Activated CD8-positive, alpha-beta T cell treated with anti-CD3 and anti-CD28 coated beads for 36 hours (primary cell): ENCODE measurements at regions of chr19 and their contacts with region 1.

Region 1: GRCh38 chr19:41641879-41642485 is 15.1 kb upstream of the CEACAM4 start:
- DNase-seq: peak; percentile 80
- ATAC-seq: peak; percentile 88
- H3K4me3 Mint-ChIP-seq: no peak overlapping the region
- H3K27ac Mint-ChIP-seq: no peak overlapping the region
- H3K4me1 Mint-ChIP-seq: no peaks in the 10 kb centered on the region
- H3K27me3 Mint-ChIP-seq: peaks cover 10% of the 10 kb centered on the region
- CTCF ChIP-seq: peak; percentile 94

Region 2: DNA sequence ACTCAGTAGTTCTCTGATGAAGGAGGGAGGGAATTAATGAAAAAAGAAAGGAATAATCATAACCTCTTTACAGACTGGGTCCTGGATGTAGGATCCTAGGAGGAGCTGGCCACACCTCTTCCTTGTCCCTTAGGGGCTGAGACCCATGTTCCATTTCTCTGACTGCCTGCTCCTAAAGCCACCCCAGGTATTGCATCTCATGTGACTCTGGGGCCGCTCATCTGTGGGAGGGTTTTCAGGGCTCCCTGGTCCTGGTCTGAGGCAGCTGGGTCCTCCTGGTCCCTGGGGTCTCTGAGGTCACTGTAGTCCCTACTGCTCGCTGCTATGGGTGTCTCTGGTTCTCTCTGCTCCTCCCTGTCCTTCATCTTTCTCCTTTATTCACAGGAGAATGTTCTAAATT is 63.1 kb before region 1 on chr19:
- CTCF ChIA-PET with region 1: no interaction called
- POLR2A ChIA-PET with region 1: no interaction called
- intact Hi-C with region 1: no loop called
- DNase-seq: no peak
- ATAC-seq: no peak
- H3K4me3 Mint-ChIP-seq: no peak overlapping the region
- H3K27ac Mint-ChIP-seq: no peak overlapping the region
- H3K4me1 Mint-ChIP-seq: peaks cover 18% of the 10 kb centered on the region
- H3K27me3 Mint-ChIP-seq: no peaks in the 10 kb centered on the region
- CTCF ChIP-seq: no peak

Region 3: DNA sequence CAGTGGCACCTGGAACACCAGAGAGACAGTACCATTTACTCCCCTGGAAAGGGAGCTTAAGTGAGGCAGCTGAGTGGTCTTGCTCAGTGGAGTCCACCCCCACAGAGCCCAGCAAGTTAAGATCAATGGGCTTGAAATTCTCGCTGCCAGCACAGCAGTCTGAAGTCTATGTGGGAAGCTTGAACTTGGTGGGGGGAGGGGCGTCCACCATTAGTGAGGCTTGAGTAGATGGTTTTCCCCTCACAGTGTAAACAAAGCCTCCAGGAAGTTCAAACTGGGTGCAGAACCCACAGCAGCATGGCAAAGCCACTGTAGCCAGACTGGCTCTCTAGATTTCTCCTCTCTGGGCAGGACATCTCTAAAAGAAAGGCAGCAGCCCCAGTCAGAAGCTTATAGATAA is 15.2 kb after region 1 on chr19:
- CTCF ChIA-PET with region 1: interaction called, 32 read pairs
- POLR2A ChIA-PET with region 1: no interaction called
- intact Hi-C with region 1: no loop called
- DNase-seq: peak; percentile 6
- ATAC-seq: no peak
- H3K4me3 Mint-ChIP-seq: no peak overlapping the region
- H3K27ac Mint-ChIP-seq: no peak overlapping the region
- H3K4me1 Mint-ChIP-seq: peaks cover 1% of the 10 kb centered on the region
- H3K27me3 Mint-ChIP-seq: peaks cover 34% of the 10 kb centered on the region
- CTCF ChIP-seq: no peak

Region 4: GRCh38 chr19:41691268-41691970 is 49.4 kb after region 1 on chr19:
- CTCF ChIA-PET with region 1: interaction called, 26 read pairs
- POLR2A ChIA-PET with region 1: no interaction called
- intact Hi-C with region 1: no loop called
- DNase-seq: peak; percentile 45
- ATAC-seq: peak; percentile 37
- H3K4me3 Mint-ChIP-seq: no peak overlapping the region
- H3K27ac Mint-ChIP-seq: no peak overlapping the region
- H3K4me1 Mint-ChIP-seq: no peaks in the 10 kb centered on the region
- H3K27me3 Mint-ChIP-seq: peaks cover 26% of the 10 kb centered on the region
- CTCF ChIP-seq: peak; percentile 64

Region 5: DNA sequence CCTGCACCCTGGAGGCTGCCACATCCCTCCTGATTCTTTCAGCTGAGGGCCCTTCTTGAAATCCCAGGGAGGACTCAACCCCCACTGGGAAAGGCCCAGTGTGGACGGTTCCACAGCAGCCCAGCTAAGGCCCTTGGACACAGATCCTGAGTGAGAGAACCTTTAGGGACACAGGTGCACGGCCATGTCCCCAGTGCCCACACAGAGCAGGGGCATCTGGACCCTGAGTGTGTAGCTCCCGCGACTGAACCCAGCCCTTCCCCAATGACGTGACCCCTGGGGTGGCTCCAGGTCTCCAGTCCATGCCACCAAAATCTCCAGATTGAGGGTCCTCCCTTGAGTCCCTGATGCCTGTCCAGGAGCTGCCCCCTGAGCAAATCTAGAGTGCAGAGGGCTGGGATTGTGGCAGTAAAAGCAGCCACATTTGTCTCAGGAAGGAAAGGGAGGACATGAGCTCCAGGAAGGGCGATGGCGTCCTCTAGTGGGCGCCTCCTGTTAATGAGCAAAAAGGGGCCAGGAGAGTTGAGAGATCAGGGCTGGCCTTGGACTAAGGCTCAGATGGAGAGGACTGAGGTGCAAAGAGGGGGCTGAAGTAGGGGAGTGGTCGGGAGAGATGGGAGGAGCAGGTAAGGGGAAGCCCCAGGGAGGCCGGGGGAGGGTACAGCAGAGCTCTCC is 59.6 kb after region 1 on chr19:
- CTCF ChIA-PET with region 1: interaction called, 27 read pairs
- POLR2A ChIA-PET with region 1: no interaction called
- intact Hi-C with region 1: no loop called
- DNase-seq: peak; percentile 46
- ATAC-seq: no peak
- H3K4me3 Mint-ChIP-seq: no peak overlapping the region
- H3K27ac Mint-ChIP-seq: no peak overlapping the region
- H3K4me1 Mint-ChIP-seq: no peaks in the 10 kb centered on the region
- H3K27me3 Mint-ChIP-seq: peaks cover 30% of the 10 kb centered on the region
- CTCF ChIP-seq: peak; percentile 53

Region 6: DNA sequence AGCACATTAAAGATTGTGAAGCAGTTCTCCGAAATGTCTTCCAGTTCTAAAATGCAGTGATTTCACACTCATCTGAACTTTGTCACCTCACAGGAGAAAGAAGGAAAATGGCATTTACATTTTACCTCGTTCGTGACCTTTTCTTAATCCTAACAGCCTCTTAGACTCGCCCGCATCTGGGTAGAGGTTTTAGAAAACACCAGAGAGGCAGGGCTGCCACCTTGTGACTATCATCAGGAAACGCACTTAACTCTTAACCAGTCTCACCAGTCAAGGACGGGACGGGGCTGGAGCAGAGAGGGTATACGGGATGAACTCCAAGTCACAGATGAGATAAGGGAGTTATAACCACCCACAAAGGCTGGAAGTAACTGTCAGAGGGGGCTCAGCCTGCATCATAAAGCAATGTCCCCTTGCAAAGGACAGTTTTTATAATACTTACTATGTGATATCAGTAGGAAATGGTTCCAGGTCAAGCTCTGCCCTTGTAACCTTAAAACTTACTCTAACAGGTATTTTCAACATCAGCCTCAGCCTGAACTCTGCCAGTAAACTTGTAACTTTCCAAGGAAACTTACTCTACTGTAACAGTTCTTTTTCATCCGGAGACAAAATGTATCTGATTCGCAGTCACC is 104.7 kb after region 1 on chr19:
- CTCF ChIA-PET with region 1: interaction called, 34 read pairs
- POLR2A ChIA-PET with region 1: no interaction called
- intact Hi-C with region 1: loop called (anchors 10 kb)
- DNase-seq: peak; percentile 74
- ATAC-seq: peak; percentile 85
- H3K4me3 Mint-ChIP-seq: no peak overlapping the region
- H3K27ac Mint-ChIP-seq: no peak overlapping the region
- H3K4me1 Mint-ChIP-seq: peaks cover 11% of the 10 kb centered on the region
- H3K27me3 Mint-ChIP-seq: peaks cover 51% of the 10 kb centered on the region
- CTCF ChIP-seq: peak; percentile 74